ENCODE measurements at regions of chr1 and their contacts with region 1.

Region 1: DNA sequence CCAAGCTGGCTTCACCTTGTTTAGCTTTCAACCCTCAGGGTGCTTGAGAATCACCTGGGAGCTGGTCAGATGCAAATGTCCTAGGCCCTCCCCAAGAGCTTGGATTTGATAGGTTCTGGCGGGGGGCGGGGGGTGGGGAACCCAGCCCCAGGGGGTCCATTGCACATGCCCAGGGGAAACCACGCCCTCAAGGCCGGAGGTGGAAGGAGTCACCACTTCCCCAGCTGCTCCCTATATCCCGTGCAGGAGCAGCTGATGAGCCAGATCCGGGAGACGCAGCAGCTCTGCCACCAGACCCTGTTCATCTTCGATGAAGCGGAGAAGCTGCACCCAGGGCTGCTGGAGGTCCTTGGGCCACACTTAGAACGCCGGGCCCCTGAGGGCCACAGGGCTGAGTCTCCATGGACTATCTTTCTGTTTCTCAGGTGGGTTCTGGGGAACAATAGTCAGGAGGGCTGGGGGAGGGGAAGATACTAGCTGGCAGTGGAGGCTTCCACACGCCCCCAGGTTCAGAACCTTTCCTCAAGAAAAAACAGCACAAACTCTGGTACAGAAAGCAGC is 5.9 kb downstream of the TOR3A start:
- DNase-seq: no peak
- ATAC-seq: no peak

Region 2: GRCh38 chr1:178818416-178818815 is 269.3 kb before region 1 on chr1:
- intact Hi-C with region 1: no loop called
- DNase-seq: no peak
- ATAC-seq: no peak

Region 3: DNA sequence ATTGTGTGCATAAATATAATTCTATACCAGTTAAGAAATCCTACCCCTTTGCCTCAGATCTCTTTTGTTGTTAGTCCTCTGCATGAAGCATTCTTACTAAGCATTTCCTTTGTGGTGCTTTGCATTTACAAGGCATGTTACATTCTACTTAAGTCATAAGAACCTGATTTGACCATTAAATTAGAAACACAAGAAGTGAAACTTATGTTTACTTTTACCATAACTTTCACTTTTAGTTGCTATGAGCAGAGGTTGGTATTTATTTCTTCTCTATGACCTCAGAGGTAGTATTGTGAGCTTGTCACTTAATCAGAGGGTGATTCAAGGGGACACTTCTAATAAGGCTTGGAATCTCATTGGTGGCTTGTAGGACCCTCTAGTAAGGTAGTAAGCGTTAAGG is 53.0 kb before region 1 on chr1:
- intact Hi-C with region 1: no loop called
- DNase-seq: no peak
- ATAC-seq: no peak

Region 4: GRCh38 chr1:179046808-179047635 is 40.7 kb before region 1 on chr1:
- intact Hi-C with region 1: no loop called
- DNase-seq: no peak
- ATAC-seq: peak; percentile 45

Region 5: DNA sequence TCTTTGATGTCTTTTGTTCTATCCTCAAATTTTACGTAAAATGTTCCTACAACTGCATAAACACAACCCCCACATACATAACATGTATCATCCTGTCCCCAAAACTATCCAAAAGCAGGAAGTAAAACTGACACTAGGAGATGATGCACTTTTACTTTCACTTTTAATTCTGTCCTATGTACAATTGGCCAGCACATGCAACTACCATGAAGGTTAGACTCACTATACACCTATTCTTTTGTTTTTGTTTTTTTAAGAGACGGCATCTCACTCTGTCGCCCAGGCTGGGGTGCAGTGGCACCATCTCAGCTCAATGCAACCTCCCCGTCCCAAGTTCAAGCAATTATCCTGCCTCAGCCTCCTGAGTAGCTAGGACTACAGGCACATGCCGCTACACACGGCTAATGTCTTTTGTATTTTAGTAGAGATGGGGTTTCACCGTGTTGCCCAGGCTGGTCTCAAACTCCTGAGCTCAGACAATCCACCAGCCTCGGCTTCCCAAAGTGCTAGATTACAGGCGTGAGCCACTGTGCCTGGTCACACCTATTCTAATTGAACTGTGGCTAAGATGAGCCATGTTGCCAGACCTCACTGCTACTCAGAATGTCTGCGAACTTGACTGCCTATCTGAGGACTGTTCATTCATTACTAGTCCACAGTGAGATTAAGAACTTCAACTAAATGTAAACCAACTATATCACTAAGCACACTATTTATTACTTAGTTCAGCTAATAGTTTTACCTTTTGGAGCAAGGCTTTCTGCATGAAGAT is 42.1 kb after region 1 on chr1:
- intact Hi-C with region 1: loop called (anchors 5 kb)
- DNase-seq: no peak
- ATAC-seq: peak; percentile 50

Region 6: GRCh38 chr1:179190861-179191260 is 103.1 kb after region 1 on chr1:
- intact Hi-C with region 1: no loop called
- DNase-seq: no peak
- ATAC-seq: peak; percentile 67

Measured in Right ventricle myocardium inferior (tissue), 1 donor.